ENCODE measurements at regions of chr9 and their contacts with region 1.

Region 1: DNA sequence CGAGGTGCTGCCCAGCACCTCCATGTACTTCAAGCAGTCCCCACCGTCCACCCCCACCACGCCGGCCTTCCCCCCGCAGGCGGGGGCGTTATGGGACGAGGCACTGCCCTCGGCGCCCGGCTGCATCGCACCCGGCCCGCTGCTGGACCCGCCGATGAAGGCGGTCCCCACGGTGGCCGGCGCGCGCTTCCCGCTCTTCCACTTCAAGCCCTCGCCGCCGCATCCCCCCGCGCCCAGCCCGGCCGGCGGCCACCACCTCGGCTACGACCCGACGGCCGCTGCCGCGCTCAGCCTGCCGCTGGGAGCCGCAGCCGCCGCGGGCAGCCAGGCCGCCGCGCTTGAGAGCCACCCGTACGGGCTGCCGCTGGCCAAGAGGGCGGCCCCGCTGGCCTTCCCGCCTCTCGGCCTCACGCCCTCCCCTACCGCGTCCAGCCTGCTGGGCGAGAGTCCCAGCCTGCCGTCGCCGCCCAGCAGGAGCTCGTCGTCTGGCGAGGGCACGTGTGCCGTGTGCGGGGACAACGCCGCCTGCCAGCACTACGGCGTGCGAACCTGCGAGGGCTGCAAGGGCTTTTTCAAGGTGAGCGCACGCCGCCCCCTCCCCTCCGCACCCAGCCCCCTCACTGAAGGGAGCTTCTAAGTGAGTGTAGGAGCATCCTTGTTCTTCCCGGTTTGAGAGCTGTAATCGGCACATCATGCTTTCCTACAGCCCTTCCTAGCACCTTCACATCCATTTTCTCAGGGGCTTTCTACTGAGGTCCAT is 6.9 kb downstream of the NR4A3 start:
- DNase-seq: no peak
- H3K4me3 Mint-ChIP-seq: no peak overlapping the region
- H3K27ac Mint-ChIP-seq: no peak overlapping the region
- H3K4me1 Mint-ChIP-seq: peaks cover 47% of the 10 kb centered on the region
- H3K27me3 Mint-ChIP-seq: peaks cover 31% of the 10 kb centered on the region

Region 2: DNA sequence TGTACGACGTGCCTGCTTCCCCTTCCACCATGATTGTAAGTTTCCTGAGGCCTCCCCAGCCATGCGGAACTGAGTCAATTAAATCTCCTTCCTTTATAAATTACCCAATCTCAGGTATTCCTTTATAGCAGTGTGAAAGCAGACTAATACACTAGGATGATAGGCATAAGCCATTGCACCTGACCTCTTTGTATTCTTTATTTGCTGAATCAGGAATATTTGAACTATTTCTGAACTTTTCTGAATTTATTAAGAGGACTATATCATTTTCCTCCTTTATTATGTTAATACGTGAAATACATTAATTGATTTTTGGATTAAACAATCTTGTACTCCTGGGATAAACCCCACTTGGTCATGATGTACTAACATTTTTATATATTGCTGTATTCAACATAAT is 35.1 kb before region 1 on chr9:
- CTCF ChIA-PET with region 1: no interaction called
- POLR2A ChIA-PET with region 1: no interaction called
- intact Hi-C with region 1: loop called (anchors 1 kb)
- DNase-seq: no peak
- H3K4me3 Mint-ChIP-seq: no peak overlapping the region
- H3K27ac Mint-ChIP-seq: no peak overlapping the region
- H3K4me1 Mint-ChIP-seq: no peaks in the 10 kb centered on the region
- H3K27me3 Mint-ChIP-seq: peaks cover 14% of the 10 kb centered on the region

Region 3: DNA sequence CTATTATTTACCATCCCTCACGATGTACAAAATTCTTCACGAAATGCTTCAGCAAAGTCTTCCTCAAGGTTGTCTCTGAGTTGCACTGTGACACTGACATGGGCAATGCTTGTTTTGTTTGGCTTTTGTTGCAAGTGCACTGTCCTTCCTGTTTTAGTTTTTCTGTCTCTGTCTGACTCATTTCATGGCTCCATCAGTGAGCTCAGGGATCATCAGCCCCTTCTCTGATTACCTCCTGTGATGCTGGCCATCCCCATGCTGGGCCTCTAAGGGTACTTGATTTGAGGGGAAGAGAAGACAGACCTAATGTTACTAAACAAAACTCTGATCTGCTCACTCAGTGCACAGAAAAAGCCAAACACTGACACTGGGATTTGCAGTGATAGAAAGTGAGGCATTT is 40.2 kb after region 1 on chr9:
- CTCF ChIA-PET with region 1: interaction called, 4 read pairs
- POLR2A ChIA-PET with region 1: no interaction called
- intact Hi-C with region 1: loop called (anchors 1 kb)
- DNase-seq: no peak
- H3K4me3 Mint-ChIP-seq: no peak overlapping the region
- H3K27ac Mint-ChIP-seq: no peak overlapping the region
- H3K4me1 Mint-ChIP-seq: peaks cover 21% of the 10 kb centered on the region
- H3K27me3 Mint-ChIP-seq: no peaks in the 10 kb centered on the region

Region 4: GRCh38 chr9:99954819-99955218 is 126.2 kb after region 1 on chr9:
- CTCF ChIA-PET with region 1: interaction called, 3 read pairs
- POLR2A ChIA-PET with region 1: no interaction called
- intact Hi-C with region 1: loop called (anchors 1 kb)
- DNase-seq: no peak
- H3K4me3 Mint-ChIP-seq: no peak overlapping the region
- H3K27ac Mint-ChIP-seq: peak overlapping the region; percentile 62
- H3K4me1 Mint-ChIP-seq: peaks cover 22% of the 10 kb centered on the region
- H3K27me3 Mint-ChIP-seq: no peaks in the 10 kb centered on the region